ENCODE measurements at regions of chr14 and their contacts with region 1.

Region 1: DNA sequence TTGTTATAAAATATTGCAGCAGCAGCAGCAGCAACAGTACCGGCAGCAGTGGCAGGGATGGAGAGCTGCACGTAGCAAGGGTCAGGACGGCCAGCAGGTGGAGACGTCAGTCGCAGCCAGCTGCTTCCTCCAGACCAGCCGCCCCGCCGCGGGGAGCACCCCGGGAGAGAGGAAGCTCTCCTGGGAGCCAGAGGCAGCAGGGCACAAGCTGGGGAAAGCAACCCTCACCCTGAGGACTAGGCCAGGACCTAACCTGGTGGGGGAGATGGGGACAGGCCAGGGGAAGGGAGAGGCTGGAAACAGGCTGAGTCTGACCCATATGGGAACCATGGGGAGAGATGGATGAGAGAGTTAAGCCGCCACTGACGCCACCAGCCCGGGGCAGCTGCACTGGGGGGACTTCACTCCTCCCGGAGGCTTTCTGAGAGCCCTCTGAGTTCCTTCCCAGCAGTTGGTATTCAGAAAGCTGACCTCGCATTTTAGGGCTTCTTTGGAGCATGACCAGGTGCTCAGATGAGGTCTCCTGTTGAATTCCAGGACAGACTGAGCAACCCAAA is 56.3 kb downstream of the SPTB start:
- DNase-seq: peak; percentile 51 to 58 (median 55)
- H3K4me3 ChIP-seq: no peak overlapping the region
- H3K4me3 Mint-ChIP-seq: peak overlapping the region in 4 of 8 donors; percentile 35 to 46 (median 42)
- H3K27ac ChIP-seq: no peak overlapping the region
- H3K27ac Mint-ChIP-seq: peak overlapping the region in 2 of 7 donors; percentile 36 to 53
- H3K4me1 ChIP-seq: peaks cover 8% of the 10 kb centered on the region
- H3K4me1 Mint-ChIP-seq: peaks cover 2 to 6% (median 5%) of the 10 kb centered on the region in 4 donors
- H3K27me3 ChIP-seq: no peaks in the 10 kb centered on the region
- H3K27me3 Mint-ChIP-seq: peaks cover 3 to 19% of the 10 kb centered on the region in 2 donors

Region 2: GRCh38 chr14:64671591-64671990 is 151.8 kb before region 1 on chr14:
- CTCF ChIA-PET with region 1: interaction called, 23 read pairs
- POLR2A ChIA-PET with region 1: no interaction called
- intact Hi-C with region 1: loop called (anchors 1 kb)
- DNase-seq: peak; percentile 44 to 77 (median 71)
- H3K4me3 ChIP-seq: no peak overlapping the region
- H3K4me3 Mint-ChIP-seq: no peak overlapping the region
- H3K27ac ChIP-seq: no peak overlapping the region
- H3K27ac Mint-ChIP-seq: peak overlapping the region in 6 of 7 donors; percentile 11 to 79 (median 64)
- H3K4me1 ChIP-seq: peaks cover 37% of the 10 kb centered on the region
- H3K4me1 Mint-ChIP-seq: peaks cover 30 to 38% (median 33%) of the 10 kb centered on the region in 4 donors
- H3K27me3 ChIP-seq: no peaks in the 10 kb centered on the region
- H3K27me3 Mint-ChIP-seq: no peaks in the 10 kb centered on the region

Region 3: GRCh38 chr14:64775063-64775777 is 48.2 kb before region 1 on chr14:
- CTCF ChIA-PET with region 1: interaction called, 10 read pairs
- POLR2A ChIA-PET with region 1: no interaction called
- intact Hi-C with region 1: no loop called
- DNase-seq: no peak
- H3K4me3 ChIP-seq: no peak overlapping the region
- H3K4me3 Mint-ChIP-seq: no peak overlapping the region
- H3K27ac ChIP-seq: no peak overlapping the region
- H3K27ac Mint-ChIP-seq: no peak overlapping the region
- H3K4me1 ChIP-seq: peaks cover 22% of the 10 kb centered on the region
- H3K4me1 Mint-ChIP-seq: peaks cover 10 to 20% (median 19%) of the 10 kb centered on the region in 4 donors
- H3K27me3 ChIP-seq: no peaks in the 10 kb centered on the region
- H3K27me3 Mint-ChIP-seq: no peaks in the 10 kb centered on the region

Region 4: GRCh38 chr14:64807551-64807950 is 15.8 kb before region 1 on chr14:
- CTCF ChIA-PET with region 1: interaction called, 14 read pairs
- POLR2A ChIA-PET with region 1: no interaction called
- intact Hi-C with region 1: no loop called
- DNase-seq: no peak
- H3K4me3 ChIP-seq: no peak overlapping the region
- H3K4me3 Mint-ChIP-seq: no peak overlapping the region
- H3K27ac ChIP-seq: no peak overlapping the region
- H3K27ac Mint-ChIP-seq: no peak overlapping the region
- H3K4me1 ChIP-seq: peaks cover 4% of the 10 kb centered on the region
- H3K4me1 Mint-ChIP-seq: peaks cover 3 to 5% (median 4%) of the 10 kb centered on the region in 4 donors
- H3K27me3 ChIP-seq: no peaks in the 10 kb centered on the region
- H3K27me3 Mint-ChIP-seq: no peaks in the 10 kb centered on the region

Region 5: DNA sequence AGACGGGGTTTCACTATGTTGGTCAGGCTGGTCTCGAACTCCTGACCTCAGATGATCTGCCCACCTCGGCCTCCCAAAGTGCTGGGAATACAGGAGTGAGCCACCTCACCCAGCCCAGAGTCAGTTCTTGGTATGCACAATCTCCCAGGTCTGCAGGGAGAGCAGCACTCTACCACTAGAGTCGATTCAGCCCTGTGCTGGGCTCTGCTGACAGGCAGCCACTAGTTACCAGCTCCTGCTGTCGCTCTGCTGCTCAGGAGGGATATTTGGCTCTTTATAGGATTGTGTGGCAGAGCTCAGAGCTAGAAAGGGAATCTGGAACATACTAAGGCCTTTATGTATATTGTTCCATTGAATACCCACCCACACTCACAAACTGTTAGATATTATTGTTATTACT is 12.0 kb after region 1 on chr14:
- CTCF ChIA-PET with region 1: interaction called, 15 read pairs
- POLR2A ChIA-PET with region 1: no interaction called
- intact Hi-C with region 1: no loop called
- DNase-seq: no peak
- H3K4me3 ChIP-seq: no peak overlapping the region
- H3K4me3 Mint-ChIP-seq: no peak overlapping the region
- H3K27ac ChIP-seq: no peak overlapping the region
- H3K27ac Mint-ChIP-seq: no peak overlapping the region
- H3K4me1 ChIP-seq: no peaks in the 10 kb centered on the region
- H3K4me1 Mint-ChIP-seq: no peaks in the 10 kb centered on the region
- H3K27me3 ChIP-seq: no peaks in the 10 kb centered on the region
- H3K27me3 Mint-ChIP-seq: peaks cover 14 to 19% of the 10 kb centered on the region in 2 donors

Region 6: GRCh38 chr14:65131301-65131701 is 307.9 kb after region 1 on chr14:
- CTCF ChIA-PET with region 1: no interaction called
- POLR2A ChIA-PET with region 1: no interaction called
- intact Hi-C with region 1: no loop called
- DNase-seq: no peak
- H3K4me3 ChIP-seq: no peak overlapping the region
- H3K4me3 Mint-ChIP-seq: no peak overlapping the region
- H3K27ac ChIP-seq: no peak overlapping the region
- H3K27ac Mint-ChIP-seq: no peak overlapping the region
- H3K4me1 ChIP-seq: no peaks in the 10 kb centered on the region
- H3K4me1 Mint-ChIP-seq: peaks cover 0 to 5% (median 2%) of the 10 kb centered on the region in 4 donors
- H3K27me3 ChIP-seq: no peaks in the 10 kb centered on the region
- H3K27me3 Mint-ChIP-seq: no peaks in the 10 kb centered on the region

Measured in CD4-positive, alpha-beta memory T cell (primary cell).